ENCODE measurements at regions of chr19 and their contacts with region 1.

Region 1: DNA sequence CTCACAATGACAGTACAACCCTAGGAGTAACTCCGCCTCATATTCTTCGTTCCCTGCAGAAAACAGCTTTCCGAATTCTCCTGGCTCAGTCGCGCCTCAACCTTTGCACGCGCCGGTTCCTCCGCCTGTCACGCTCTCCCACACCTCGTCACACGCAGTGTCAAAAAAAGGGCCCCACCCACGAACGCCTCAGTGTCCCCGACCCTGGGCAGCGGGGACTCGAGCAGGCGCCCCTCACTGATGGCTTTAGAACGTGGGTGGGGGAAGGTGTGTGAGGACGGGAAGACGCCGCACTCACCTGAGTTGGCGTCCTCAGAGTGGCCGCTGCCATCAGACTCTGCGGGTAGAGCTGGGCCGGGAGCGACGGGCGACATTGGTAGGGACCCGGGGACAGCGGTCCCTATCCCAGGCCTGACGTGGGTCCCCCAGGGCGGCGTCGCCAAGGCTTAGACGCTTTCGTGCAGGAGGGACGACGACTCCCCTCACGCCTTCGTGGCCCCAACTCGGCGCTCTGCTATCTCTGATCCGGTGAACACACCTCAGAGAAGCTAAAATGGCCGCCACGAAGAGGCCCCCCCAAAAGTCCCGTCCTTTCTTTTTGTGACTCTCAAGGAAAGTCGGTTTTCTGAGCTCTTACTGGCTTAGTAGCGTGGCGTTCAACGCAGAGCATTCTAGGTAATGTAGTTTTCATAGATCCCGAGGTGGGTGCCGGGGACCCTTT is at the start of gene ZNF154:
- DNase-seq: peak in 4 of 5 donors; percentile 27 to 79 (median 66)
- H3K4me3 ChIP-seq: peak within 1 kb of the TSS; percentile 43
- H3K4me3 Mint-ChIP-seq: peak within 1 kb of the TSS; percentile 83 to 99 (median 86)
- H3K27ac ChIP-seq: peak within 1 kb of the TSS; percentile 56
- H3K27ac Mint-ChIP-seq: peak within 1 kb of the TSS; percentile 71 to 99 (median 93)
- H3K4me1 ChIP-seq: peaks cover 7% of the 10 kb centered on the region
- H3K4me1 Mint-ChIP-seq: peaks cover 29 to 53% (median 36%) of the 10 kb centered on the region in 3 donors
- H3K27me3 ChIP-seq: no peaks in the 10 kb centered on the region
- H3K27me3 Mint-ChIP-seq: peaks cover 0 to 11% of the 10 kb centered on the region in 2 donors
- total RNA-seq, gene ZNF154: 6.5 to 7.7 TPM

Region 2: GRCh38 chr19:57656356-57657117 is 52.3 kb before region 1 on chr19:
- CTCF ChIA-PET with region 1: no interaction called
- POLR2A ChIA-PET with region 1: no interaction called
- DNase-seq: no peak
- H3K4me3 ChIP-seq: no peak overlapping the region
- H3K4me3 Mint-ChIP-seq: no peak overlapping the region
- H3K27ac ChIP-seq: no peak overlapping the region
- H3K27ac Mint-ChIP-seq: no peak overlapping the region
- H3K4me1 ChIP-seq: no peaks in the 10 kb centered on the region
- H3K4me1 Mint-ChIP-seq: peaks cover 4 to 6% (median 6%) of the 10 kb centered on the region in 3 donors
- H3K27me3 ChIP-seq: no peaks in the 10 kb centered on the region
- H3K27me3 Mint-ChIP-seq: peaks cover 28 to 75% of the 10 kb centered on the region in 2 donors

Region 3: GRCh38 chr19:57682226-57682766 is 26.5 kb before region 1 on chr19:
- CTCF ChIA-PET with region 1: interaction called, 5 read pairs
- POLR2A ChIA-PET with region 1: interaction called, 24 read pairs
- DNase-seq: no peak
- H3K4me3 ChIP-seq: peak overlapping the region; percentile 87
- H3K4me3 Mint-ChIP-seq: peak overlapping the region; percentile 94 to 99 (median 98)
- H3K27ac ChIP-seq: peak overlapping the region; percentile 58
- H3K27ac Mint-ChIP-seq: peak overlapping the region; percentile 77 to 97 (median 95)
- H3K4me1 ChIP-seq: peaks cover 18% of the 10 kb centered on the region
- H3K4me1 Mint-ChIP-seq: peaks cover 39 to 48% (median 48%) of the 10 kb centered on the region in 3 donors
- H3K27me3 ChIP-seq: no peaks in the 10 kb centered on the region
- H3K27me3 Mint-ChIP-seq: peaks cover 10 to 12% of the 10 kb centered on the region in 2 donors

Region 4: GRCh38 chr19:57720878-57721277 is 12.1 kb after region 1 on chr19:
- CTCF ChIA-PET with region 1: no interaction called
- POLR2A ChIA-PET with region 1: interaction called, 21 read pairs
- DNase-seq: no peak
- H3K4me3 ChIP-seq: peak overlapping the region; percentile 17
- H3K4me3 Mint-ChIP-seq: no peak overlapping the region
- H3K27ac ChIP-seq: no peak overlapping the region
- H3K27ac Mint-ChIP-seq: no peak overlapping the region
- H3K4me1 ChIP-seq: no peaks in the 10 kb centered on the region
- H3K4me1 Mint-ChIP-seq: peaks cover 11 to 20% (median 16%) of the 10 kb centered on the region in 3 donors
- H3K27me3 ChIP-seq: no peaks in the 10 kb centered on the region
- H3K27me3 Mint-ChIP-seq: no peaks in the 10 kb centered on the region

Measured in CD8-positive, alpha-beta memory T cell (primary cell).